Activated CD4-positive, alpha-beta T cell treated with anti-CD3 and anti-CD28 coated beads for 36 hours (primary cell): ENCODE measurements at regions of chr6 and their contacts with region 1.

Region 1: GRCh38 chr6:158072083-158072721 is 90.5 kb downstream of the SYNJ2 start:
- DNase-seq: peak; percentile 85
- ATAC-seq: peak; percentile 76
- H3K4me3 Mint-ChIP-seq: no peak overlapping the region
- H3K27ac Mint-ChIP-seq: no peak overlapping the region
- H3K4me1 Mint-ChIP-seq: peaks cover 27% of the 10 kb centered on the region
- H3K27me3 Mint-ChIP-seq: no peaks in the 10 kb centered on the region

Region 2: DNA sequence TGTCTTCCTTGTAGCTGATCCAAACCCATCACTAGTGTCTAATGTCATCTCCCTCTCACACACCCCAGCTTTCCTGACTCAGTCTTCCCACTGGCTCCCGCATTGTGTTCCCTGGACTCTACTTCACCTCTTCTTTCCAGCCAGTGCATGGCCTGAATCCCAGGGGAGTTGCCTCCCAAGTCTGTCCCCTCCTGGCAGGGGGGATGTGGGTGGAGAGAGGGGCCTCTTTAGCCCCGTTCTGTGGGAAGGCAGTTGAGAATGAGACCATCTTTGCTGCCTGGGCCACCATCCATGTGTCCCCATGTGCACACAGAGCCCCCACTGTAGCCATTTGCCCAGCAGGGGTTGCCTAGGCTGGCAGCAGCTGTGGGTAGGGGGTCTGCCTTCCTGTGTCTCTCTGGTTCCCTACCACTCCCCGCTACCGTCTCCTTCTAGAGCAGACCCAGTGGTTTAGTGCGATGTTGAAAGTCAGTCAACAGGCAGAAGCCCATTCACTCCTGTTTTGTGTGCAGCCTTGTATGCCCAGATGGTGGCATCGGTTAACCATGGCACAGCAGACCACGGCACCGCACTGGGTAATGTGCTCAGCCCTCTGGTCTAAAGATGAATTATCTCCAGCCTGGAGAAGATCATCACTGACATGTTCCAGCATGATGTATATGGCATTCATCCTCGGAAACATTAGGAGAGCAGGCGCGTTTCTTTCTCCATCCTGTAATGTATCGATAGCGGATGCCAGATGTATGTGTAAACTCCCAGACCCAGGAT is 428.0 kb before region 1 on chr6:
- CTCF ChIA-PET with region 1: interaction called, 3 read pairs
- POLR2A ChIA-PET with region 1: no interaction called
- intact Hi-C with region 1: loop called in 1 of 2 experiments (anchors 2 kb)
- DNase-seq: peak; percentile 64
- ATAC-seq: peak; percentile 82
- H3K4me3 Mint-ChIP-seq: no peak overlapping the region
- H3K27ac Mint-ChIP-seq: no peak overlapping the region
- H3K4me1 Mint-ChIP-seq: peaks cover 14% of the 10 kb centered on the region
- H3K27me3 Mint-ChIP-seq: no peaks in the 10 kb centered on the region

Region 3: GRCh38 chr6:157667211-157668008 is 404.8 kb before region 1 on chr6:
- CTCF ChIA-PET with region 1: interaction called, 5 read pairs
- POLR2A ChIA-PET with region 1: no interaction called
- intact Hi-C with region 1: loop called in 1 of 2 experiments (anchors 5 kb)
- DNase-seq: peak; percentile 73
- ATAC-seq: peak; percentile 48
- H3K4me3 Mint-ChIP-seq: no peak overlapping the region
- H3K27ac Mint-ChIP-seq: no peak overlapping the region
- H3K4me1 Mint-ChIP-seq: peaks cover 31% of the 10 kb centered on the region
- H3K27me3 Mint-ChIP-seq: peaks cover 5% of the 10 kb centered on the region

Region 4: DNA sequence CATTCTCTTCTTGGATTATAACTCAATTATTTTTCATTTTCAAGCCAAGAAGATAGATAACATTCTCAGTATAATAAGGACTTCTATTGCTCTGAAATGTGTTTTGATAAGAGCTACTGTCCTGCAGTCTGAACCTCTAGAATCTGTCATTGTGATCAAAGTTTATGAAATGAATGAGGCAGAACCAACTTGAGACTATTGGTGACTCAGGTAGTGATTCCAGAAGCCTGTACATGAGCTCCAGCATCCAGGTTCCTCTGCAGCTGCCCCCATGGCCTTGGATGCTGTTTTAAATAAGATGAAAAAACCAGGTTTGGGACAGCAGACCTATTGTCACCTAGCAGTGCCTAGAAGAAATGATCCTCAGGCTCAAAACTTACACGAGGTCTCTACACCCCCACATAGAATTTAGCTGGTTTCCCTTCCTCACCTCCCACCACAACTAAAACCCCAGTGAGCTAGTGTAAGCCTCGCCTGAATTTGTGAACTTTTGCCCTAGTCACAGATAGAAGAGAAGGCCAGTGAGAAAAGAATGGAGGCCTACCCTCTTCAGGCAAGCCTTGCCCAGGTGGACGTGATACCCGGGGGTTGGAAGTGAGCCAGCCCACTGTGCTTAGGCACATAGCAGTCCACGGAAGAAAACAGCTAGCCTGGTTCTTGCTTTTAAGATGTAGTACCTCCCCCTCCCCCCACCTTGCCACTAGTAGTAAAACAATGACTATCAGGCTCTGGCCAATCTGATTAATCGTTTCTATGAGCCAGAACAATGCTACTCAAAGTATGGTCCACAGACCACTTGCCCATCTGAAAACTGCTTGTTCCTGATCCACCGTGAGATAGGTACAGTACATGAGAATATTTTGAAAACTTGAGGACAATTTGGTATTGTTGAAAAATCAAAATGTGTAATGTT is 163.6 kb before region 1 on chr6:
- CTCF ChIA-PET with region 1: interaction called, 3 read pairs
- POLR2A ChIA-PET with region 1: no interaction called
- intact Hi-C with region 1: loop called in 1 of 2 experiments (anchors 10 kb)
- DNase-seq: no peak
- ATAC-seq: peak; percentile 80
- H3K4me3 Mint-ChIP-seq: no peak overlapping the region
- H3K27ac Mint-ChIP-seq: peak overlapping the region; percentile 15
- H3K4me1 Mint-ChIP-seq: peaks cover 22% of the 10 kb centered on the region
- H3K27me3 Mint-ChIP-seq: no peaks in the 10 kb centered on the region

Region 5: GRCh38 chr6:158057213-158057987 is 14.8 kb before region 1 on chr6:
- CTCF ChIA-PET with region 1: interaction called, 18 read pairs
- POLR2A ChIA-PET with region 1: no interaction called
- intact Hi-C with region 1: no loop called
- DNase-seq: peak; percentile 76
- ATAC-seq: peak; percentile 97
- H3K4me3 Mint-ChIP-seq: no peak overlapping the region
- H3K27ac Mint-ChIP-seq: peak overlapping the region; percentile 59
- H3K4me1 Mint-ChIP-seq: peaks cover 59% of the 10 kb centered on the region
- H3K27me3 Mint-ChIP-seq: no peaks in the 10 kb centered on the region

Region 6: DNA sequence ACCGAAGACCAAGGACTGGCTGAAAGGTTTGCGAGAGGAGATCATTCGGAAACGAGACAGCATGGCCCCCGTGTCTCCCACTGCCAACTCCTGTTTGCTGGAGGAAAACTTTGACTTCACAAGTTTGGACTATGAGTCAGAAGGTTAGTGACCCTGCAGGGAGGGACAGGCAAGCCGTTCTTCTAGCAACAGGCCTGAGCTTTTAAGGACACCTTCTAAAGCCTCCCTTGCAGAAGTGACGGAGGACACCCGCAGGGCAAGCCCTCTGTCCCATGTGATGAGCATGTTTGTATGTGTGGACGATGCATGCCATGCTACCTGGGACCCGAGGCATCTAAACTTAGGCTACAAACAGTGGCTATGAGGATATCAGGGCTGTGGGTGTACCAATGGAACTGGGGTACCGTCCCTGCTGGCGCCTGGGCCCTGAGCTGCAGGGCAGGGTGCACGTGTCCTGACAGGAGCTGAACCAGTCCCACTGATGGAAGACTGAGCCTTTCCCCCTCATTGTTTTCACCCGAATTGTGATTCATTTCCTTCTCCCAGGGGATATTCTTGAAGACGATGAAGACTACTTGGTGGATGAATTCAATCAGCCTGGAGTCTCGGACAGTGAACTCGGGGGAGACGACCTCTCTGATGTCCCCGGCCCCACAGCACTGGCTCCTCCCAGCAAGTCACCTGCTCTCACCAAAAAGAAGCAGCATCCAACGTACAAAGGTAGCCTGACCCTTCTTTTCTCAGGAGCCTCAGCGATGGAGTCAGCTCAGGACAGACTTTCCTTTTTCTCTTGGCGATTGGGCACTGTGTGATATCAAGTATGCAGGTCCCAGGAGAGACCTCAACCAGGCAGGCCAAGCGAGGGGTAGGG is 11.5 kb after region 1 on chr6:
- CTCF ChIA-PET with region 1: interaction called, 10 read pairs
- POLR2A ChIA-PET with region 1: no interaction called
- intact Hi-C with region 1: no loop called
- DNase-seq: no peak
- ATAC-seq: no peak
- H3K4me3 Mint-ChIP-seq: no peak overlapping the region
- H3K27ac Mint-ChIP-seq: no peak overlapping the region
- H3K4me1 Mint-ChIP-seq: no peaks in the 10 kb centered on the region
- H3K27me3 Mint-ChIP-seq: no peaks in the 10 kb centered on the region

Region 7: DNA sequence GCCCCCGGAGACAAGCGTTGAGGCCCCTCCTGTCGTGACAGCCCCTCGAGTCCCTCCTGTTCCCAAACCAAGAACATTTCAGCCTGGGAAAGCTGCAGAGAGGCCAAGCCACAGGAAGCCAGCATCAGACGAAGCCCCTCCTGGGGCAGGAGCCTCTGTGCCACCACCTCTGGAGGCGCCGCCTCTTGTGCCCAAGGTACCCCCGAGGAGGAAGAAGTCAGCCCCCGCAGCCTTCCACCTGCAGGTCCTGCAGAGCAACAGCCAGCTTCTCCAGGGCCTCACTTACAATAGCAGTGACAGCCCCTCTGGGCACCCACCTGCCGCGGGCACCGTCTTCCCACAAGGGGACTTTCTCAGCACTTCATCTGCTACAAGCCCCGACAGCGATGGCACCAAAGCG is 23.5 kb after region 1 on chr6:
- CTCF ChIA-PET with region 1: no interaction called
- POLR2A ChIA-PET with region 1: no interaction called
- intact Hi-C with region 1: no loop called
- DNase-seq: no peak
- ATAC-seq: no peak
- H3K4me3 Mint-ChIP-seq: no peak overlapping the region
- H3K27ac Mint-ChIP-seq: no peak overlapping the region
- H3K4me1 Mint-ChIP-seq: no peaks in the 10 kb centered on the region
- H3K27me3 Mint-ChIP-seq: no peaks in the 10 kb centered on the region

Region 8: GRCh38 chr6:158837684-158838625 is 765.8 kb after region 1 on chr6:
- CTCF ChIA-PET with region 1: no interaction called
- POLR2A ChIA-PET with region 1: no interaction called
- intact Hi-C with region 1: no loop called
- DNase-seq: no peak
- ATAC-seq: no peak
- H3K4me3 Mint-ChIP-seq: no peak overlapping the region
- H3K27ac Mint-ChIP-seq: no peak overlapping the region
- H3K4me1 Mint-ChIP-seq: no peaks in the 10 kb centered on the region
- H3K27me3 Mint-ChIP-seq: peaks cover 2% of the 10 kb centered on the region